Gastrocnemius medialis (tissue), 4 donors: ENCODE measurements at regions of chr21 and their contacts with region 1.

Region 1: GRCh38 chr21:32403201-32403777 is 9.2 kb upstream of the EVA1C start:
- DNase-seq: no peak
- ATAC-seq: no peak
- H3K4me3 ChIP-seq: no peak overlapping the region
- H3K27ac ChIP-seq: no peak overlapping the region
- H3K4me1 ChIP-seq: no peaks in the 10 kb centered on the region
- H3K27me3 ChIP-seq: peaks cover 0 to 5% (median 0%) of the 10 kb centered on the region in 3 donors
- CTCF ChIP-seq: peak; percentile 23 to 68 (median 58)
- POLR2A ChIP-seq: no peak

Region 2: GRCh38 chr21:32135401-32136363 is 267.6 kb before region 1 on chr21:
- in situ Hi-C with region 1: no loop called
- intact Hi-C with region 1: no loop called
- DNase-seq: no peak
- ATAC-seq: no peak
- H3K4me3 ChIP-seq: no peak overlapping the region
- H3K27ac ChIP-seq: no peak overlapping the region
- H3K4me1 ChIP-seq: peaks cover 0 to 11% of the 10 kb centered on the region in 2 donors
- H3K27me3 ChIP-seq: no peaks in the 10 kb centered on the region
- CTCF ChIP-seq: no peak
- POLR2A ChIP-seq: no peak

Region 3: DNA sequence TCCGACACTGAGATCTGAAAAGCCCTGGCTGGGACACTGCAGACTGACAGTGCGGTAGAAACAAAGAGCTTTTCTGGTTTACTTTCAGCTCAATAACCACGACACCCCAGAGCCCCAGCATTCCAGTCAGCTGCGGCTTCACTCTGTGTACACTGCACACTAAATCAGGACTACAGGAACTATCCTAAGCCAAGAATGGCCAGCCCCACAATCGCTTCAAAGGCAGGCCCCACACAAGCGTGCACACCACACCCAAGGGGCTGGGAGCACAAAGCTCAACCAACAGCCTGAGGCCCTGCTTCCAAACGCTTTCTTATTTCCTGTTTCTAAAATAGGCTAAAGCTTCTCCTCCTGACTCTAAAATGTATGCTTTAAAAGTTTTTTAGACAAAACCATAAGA is 38.9 kb before region 1 on chr21:
- in situ Hi-C with region 1: no loop called
- intact Hi-C with region 1: no loop called
- DNase-seq: no peak
- ATAC-seq: peak; percentile 38 to 73
- H3K4me3 ChIP-seq: no peak overlapping the region
- H3K27ac ChIP-seq: peak overlapping the region in 3 of 4 donors; percentile 35 to 62 (median 61)
- H3K4me1 ChIP-seq: peaks cover 0 to 2% of the 10 kb centered on the region in 2 donors
- H3K27me3 ChIP-seq: no peaks in the 10 kb centered on the region
- CTCF ChIP-seq: no peak
- POLR2A ChIP-seq: no peak

Region 4: DNA sequence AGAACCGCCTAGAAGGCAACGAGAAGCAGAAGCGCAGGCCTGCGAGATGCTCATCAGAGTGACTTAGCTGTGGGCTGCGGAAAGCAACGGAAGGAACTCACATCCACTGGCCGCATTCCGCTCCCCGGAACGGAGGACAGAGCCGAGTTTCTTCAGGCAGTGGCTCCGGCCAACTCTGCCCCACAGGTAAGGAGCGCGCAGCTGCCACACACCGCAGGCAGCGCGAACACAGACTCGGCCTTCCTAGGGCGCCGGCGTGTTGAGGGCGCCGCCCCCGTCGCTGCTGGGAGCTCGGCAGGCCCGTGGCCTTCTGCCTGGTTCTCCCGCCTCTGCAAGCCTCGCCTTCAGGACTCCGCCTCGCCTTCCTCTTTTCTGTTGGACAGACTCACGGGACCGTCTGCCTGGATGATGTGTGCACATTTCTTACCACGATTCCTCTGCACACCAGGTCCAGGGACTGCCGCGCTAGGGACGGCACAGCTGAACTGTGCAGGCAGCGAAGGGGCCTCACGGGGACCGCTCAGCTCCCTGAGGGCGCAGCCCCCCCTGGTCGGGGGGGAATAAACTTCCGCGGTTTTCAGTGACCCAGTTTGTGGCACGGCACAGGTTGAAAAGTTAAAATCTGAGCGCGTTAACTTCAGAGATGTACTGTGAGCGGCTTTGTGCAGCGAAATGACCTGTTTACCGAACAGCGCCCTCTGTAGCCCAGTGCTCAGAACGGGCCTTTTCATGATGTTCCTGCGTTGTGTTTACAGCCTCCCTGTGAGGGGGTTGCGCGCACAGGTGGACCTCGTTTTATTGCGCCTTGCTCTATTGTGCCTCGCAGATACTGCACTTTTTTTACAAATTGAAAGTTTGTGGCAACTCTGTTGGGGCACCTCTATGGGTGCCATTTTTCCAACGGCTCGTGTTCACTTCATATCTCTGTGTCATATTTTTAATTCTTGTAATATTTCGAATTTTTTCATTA is 166.3 kb after region 1 on chr21:
- in situ Hi-C with region 1: loop called (anchors 10 kb)
- intact Hi-C with region 1: loop called (anchors 1 kb)
- DNase-seq: peak; percentile 35 to 44
- ATAC-seq: peak; percentile 93
- H3K4me3 ChIP-seq: peak overlapping the region; percentile 58 to 84 (median 72)
- H3K27ac ChIP-seq: peak overlapping the region; percentile 57 to 76 (median 66)
- H3K4me1 ChIP-seq: peaks cover 4 to 5% of the 10 kb centered on the region in 2 donors
- H3K27me3 ChIP-seq: no peaks in the 10 kb centered on the region
- CTCF ChIP-seq: peak; percentile 55 to 80 (median 62)
- POLR2A ChIP-seq: no peak

Region 5: DNA sequence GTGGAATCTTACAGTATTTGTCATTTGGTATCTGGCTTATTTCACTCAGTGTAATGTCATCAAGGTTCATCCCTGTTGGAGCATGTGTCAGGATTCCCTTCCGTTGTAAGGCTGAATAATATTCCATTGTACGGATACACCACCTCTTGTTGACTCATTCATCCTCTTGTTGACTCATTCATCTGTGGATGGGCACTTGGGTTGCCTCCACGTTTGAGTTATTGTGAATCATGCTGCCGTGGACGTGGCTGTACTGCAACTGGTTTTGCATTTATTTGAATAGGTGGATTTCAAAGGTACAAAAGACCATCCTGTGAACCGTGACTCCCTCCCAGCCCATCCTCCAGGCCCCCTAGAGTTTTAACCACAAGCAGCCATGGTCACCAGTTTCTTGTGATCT is 193.9 kb after region 1 on chr21:
- in situ Hi-C with region 1: loop called in 1 of 4 experiments (anchors 5 kb)
- intact Hi-C with region 1: loop called (anchors 2 kb)
- DNase-seq: no peak
- ATAC-seq: no peak
- H3K4me3 ChIP-seq: no peak overlapping the region
- H3K27ac ChIP-seq: no peak overlapping the region
- H3K4me1 ChIP-seq: no peaks in the 10 kb centered on the region
- H3K27me3 ChIP-seq: no peaks in the 10 kb centered on the region
- CTCF ChIP-seq: no peak
- POLR2A ChIP-seq: no peak

Region 6: GRCh38 chr21:32604464-32604863 is 201.2 kb after region 1 on chr21:
- in situ Hi-C with region 1: loop called in 1 of 4 experiments (anchors 5 kb)
- intact Hi-C with region 1: loop called (anchors 2 kb)
- DNase-seq: no peak
- ATAC-seq: no peak
- H3K4me3 ChIP-seq: no peak overlapping the region
- H3K27ac ChIP-seq: no peak overlapping the region
- H3K4me1 ChIP-seq: no peaks in the 10 kb centered on the region
- H3K27me3 ChIP-seq: no peaks in the 10 kb centered on the region
- CTCF ChIP-seq: no peak
- POLR2A ChIP-seq: no peak